Activated CD4-positive, alpha-beta T cell treated with anti-CD3 and anti-CD28 coated beads for 36 hours (primary cell): ENCODE measurements at regions of chr12 and their contacts with region 1.

Region 1: GRCh38 chr12:44812062-44812461 is 64.1 kb downstream of the NELL2 start:
- DNase-seq: peak; percentile 51
- ATAC-seq: peak; percentile 84
- H3K4me3 Mint-ChIP-seq: no peak overlapping the region
- H3K27ac Mint-ChIP-seq: no peak overlapping the region
- H3K4me1 Mint-ChIP-seq: peaks cover 32% of the 10 kb centered on the region
- H3K27me3 Mint-ChIP-seq: no peaks in the 10 kb centered on the region

Region 2: DNA sequence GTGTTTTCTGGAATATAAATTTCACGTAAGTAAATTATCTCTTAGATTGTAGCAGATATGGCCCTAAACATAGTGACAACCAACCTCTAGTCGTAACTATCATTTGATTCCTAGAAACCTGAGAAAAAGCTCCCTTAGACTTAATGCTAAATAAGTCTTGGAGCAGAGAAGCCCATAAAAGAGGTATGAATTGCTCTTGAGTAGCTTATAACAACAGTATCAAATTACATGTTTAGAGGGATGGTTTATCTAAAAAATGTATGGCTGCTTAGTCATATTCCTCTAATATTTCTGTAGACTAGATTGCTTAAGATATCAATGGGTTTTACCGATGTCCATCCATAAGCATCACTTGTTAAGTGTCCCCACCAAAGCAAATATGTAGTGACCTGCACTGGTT is 195.7 kb before region 1 on chr12:
- CTCF ChIA-PET with region 1: no interaction called
- POLR2A ChIA-PET with region 1: no interaction called
- intact Hi-C with region 1: no loop called
- DNase-seq: no peak
- ATAC-seq: no peak
- H3K4me3 Mint-ChIP-seq: no peak overlapping the region
- H3K27ac Mint-ChIP-seq: no peak overlapping the region
- H3K4me1 Mint-ChIP-seq: no peaks in the 10 kb centered on the region
- H3K27me3 Mint-ChIP-seq: no peaks in the 10 kb centered on the region

Region 3: DNA sequence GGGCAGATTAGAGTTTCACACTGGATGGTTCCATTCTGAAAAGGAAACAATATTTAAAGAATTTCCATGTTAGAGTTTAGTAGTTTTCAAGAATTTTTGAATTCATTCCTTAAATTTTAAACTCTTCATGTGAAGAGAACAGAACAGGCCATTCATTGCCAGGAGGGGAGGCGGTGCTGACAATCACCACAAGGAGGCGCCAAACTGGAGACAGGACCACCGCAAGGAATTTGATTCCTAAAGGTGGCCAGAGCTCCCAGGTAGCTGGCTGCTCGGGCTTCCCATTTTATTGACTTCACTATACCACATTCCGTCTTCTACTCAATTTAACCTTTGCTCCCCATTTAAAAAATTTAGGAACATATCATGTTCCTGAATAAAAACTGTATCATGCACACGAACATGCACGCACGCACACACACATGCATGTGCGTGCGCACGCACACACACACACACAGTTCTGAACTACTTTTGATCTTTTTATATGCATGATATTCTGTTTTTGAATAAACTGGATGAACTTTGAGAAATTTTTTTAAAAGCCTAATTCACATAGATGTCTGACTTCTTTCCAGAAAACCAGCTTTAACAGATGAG is 37.1 kb before region 1 on chr12:
- CTCF ChIA-PET with region 1: interaction called, 13 read pairs
- POLR2A ChIA-PET with region 1: no interaction called
- intact Hi-C with region 1: loop called in 1 of 2 experiments (anchors 2 kb)
- DNase-seq: peak; percentile 78
- ATAC-seq: no peak
- H3K4me3 Mint-ChIP-seq: no peak overlapping the region
- H3K27ac Mint-ChIP-seq: no peak overlapping the region
- H3K4me1 Mint-ChIP-seq: no peaks in the 10 kb centered on the region
- H3K27me3 Mint-ChIP-seq: no peaks in the 10 kb centered on the region

Region 4: GRCh38 chr12:44780221-44780790 is 31.8 kb before region 1 on chr12:
- CTCF ChIA-PET with region 1: interaction called, 13 read pairs
- POLR2A ChIA-PET with region 1: no interaction called
- intact Hi-C with region 1: loop called in 1 of 2 experiments (anchors 2 kb)
- DNase-seq: no peak
- ATAC-seq: no peak
- H3K4me3 Mint-ChIP-seq: no peak overlapping the region
- H3K27ac Mint-ChIP-seq: no peak overlapping the region
- H3K4me1 Mint-ChIP-seq: peaks cover 6% of the 10 kb centered on the region
- H3K27me3 Mint-ChIP-seq: no peaks in the 10 kb centered on the region

Region 5: DNA sequence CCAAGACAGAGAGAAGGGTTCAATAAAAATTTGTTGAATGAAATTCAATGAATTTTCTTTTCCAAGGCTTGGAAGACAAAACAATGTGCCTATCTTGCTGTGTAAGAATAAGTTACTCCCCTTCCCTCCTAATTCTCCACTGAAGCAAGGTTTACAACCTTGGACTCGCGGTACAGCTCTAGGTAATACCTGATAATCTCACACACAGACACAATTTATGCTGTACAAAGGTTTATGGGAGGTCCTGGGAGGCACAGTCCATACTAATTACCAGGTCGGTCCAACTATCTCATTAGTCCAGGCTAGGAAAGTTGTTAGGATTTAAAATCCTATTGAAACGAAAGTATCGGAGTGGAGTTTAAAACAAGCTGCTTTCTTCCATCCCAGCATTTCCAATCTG is 21.5 kb after region 1 on chr12:
- CTCF ChIA-PET with region 1: no interaction called
- POLR2A ChIA-PET with region 1: no interaction called
- intact Hi-C with region 1: no loop called
- DNase-seq: no peak
- ATAC-seq: no peak
- H3K4me3 Mint-ChIP-seq: no peak overlapping the region
- H3K27ac Mint-ChIP-seq: peak overlapping the region; percentile 17
- H3K4me1 Mint-ChIP-seq: peaks cover 86% of the 10 kb centered on the region
- H3K27me3 Mint-ChIP-seq: no peaks in the 10 kb centered on the region